Left colon (tissue), 2 donors: ENCODE measurements at regions of chr5 and their contacts with region 1.

Region 1: GRCh38 chr5:151126199-151126645 is 31.4 kb downstream of the ANXA6 start:
- DNase-seq: peak; percentile 67 to 84
- ATAC-seq: peak; percentile 77

Region 2: DNA sequence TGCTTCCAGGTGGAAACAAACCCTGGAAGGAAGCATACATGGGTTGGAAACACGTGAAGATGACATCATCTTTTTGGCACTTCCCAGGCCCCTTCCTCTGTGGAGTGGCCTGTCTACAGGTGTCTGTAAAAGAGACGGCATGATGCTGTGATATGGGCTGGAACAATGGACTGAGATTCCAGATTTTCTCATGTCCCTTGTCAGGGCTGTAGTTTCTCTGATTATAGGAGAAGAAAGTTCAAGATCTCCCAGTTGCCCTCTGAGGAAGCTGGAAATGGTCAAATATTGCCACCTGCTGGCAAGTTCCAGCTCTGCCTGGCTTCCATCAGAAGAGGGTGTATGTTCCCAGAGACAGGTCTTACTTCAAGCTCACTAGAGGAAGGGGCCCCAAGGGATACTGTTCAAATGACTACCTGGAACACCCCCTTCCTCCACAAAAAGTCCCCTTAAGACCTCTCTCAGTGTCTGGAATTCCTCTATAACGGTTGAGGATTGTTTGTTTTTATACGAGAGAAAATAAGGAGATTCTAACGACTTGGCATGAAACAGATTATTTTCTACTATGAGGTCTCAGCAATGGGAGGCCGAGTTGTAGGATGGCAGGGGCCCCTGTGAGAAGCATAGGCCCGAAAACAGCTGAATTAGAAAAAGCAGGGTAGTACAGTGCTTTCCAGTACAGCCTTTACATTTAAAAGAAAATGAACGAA is 38.6 kb after region 1 on chr5:
- intact Hi-C with region 1: loop called (anchors 2 to 5 kb)
- DNase-seq: peak; percentile 59 to 76
- ATAC-seq: peak; percentile 93

Region 3: GRCh38 chr5:151202381-151203139 is 76.3 kb after region 1 on chr5:
- intact Hi-C with region 1: no loop called
- DNase-seq: no peak
- ATAC-seq: peak; percentile 48

Region 4: GRCh38 chr5:151239237-151239861 is 113.1 kb after region 1 on chr5:
- intact Hi-C with region 1: loop called in 1 of 2 experiments (anchors 10 kb)
- DNase-seq: peak; percentile 64 to 79
- ATAC-seq: peak; percentile 87